Calu3 (cell line): ENCODE measurements at regions of chr20 and their contacts with region 1.

Region 1: GRCh38 chr20:24160563-24161375 is 172.2 kb upstream of the GGTLC1 start:
- DNase-seq: peak; percentile 10
- H3K4me3 Mint-ChIP-seq: no peak overlapping the region
- H3K27ac Mint-ChIP-seq: no peak overlapping the region
- H3K4me1 Mint-ChIP-seq: no peaks in the 10 kb centered on the region
- H3K27me3 Mint-ChIP-seq: no peaks in the 10 kb centered on the region
- CTCF ChIP-seq: no peak

Region 2: DNA sequence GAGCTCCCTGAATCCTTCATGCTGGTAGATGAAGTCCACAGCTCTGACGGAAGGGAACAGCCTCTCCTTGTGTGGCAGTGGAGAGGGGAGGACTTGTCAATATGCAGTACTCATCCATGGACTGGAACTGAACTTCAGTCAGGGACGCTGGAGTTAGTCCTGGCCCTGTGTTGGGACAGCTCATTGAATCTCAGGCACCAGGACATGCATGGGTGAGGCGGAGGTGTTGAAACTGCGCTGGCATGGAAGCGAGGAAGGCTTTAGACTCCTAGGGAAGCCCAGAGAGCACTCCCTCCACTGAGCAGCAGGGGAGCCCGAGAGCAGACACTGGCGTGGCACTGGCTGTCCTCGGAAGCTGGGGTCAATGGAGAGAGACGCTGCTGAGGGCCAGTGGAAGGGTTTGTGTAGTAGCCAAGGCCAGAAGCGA is 10.9 kb before region 1 on chr20:
- CTCF ChIA-PET with region 1: no interaction called
- intact Hi-C with region 1: no loop called
- DNase-seq: peak; percentile 12
- H3K4me3 Mint-ChIP-seq: no peak overlapping the region
- H3K27ac Mint-ChIP-seq: no peak overlapping the region
- H3K4me1 Mint-ChIP-seq: no peaks in the 10 kb centered on the region
- H3K27me3 Mint-ChIP-seq: no peaks in the 10 kb centered on the region
- CTCF ChIP-seq: no peak

Region 3: DNA sequence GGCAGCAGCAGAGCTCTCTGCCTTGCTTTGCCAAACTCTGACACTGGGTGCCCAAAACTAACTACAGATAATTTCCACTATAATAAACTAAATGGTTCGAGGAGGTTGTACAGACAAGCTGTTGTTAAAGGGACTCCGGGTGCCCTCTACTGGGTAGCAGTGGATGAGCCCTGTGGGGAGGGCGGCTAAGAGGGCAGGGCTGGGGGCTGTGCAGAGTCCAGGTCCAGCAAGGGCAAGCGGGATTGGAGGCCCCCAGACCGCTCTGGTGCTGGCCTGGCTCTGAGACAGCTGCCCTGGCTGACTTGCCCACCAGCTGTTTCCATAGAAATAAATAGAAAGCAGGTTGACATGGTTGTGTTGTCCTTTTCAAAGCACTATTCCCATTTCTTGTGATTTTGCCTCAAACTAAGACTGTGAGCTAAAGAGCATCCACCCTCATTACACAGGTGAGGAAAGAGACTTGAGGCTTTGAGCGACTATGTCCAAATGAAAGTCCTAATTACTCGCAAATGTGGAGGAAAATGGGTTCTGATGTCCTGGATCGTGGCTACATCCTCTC is 620.7 kb after region 1 on chr20:
- CTCF ChIA-PET with region 1: interaction called, 4 read pairs
- intact Hi-C with region 1: loop called (anchors 5 kb)
- DNase-seq: peak; percentile 10
- H3K4me3 Mint-ChIP-seq: no peak overlapping the region
- H3K27ac Mint-ChIP-seq: no peak overlapping the region
- H3K4me1 Mint-ChIP-seq: no peaks in the 10 kb centered on the region
- H3K27me3 Mint-ChIP-seq: peaks cover 22% of the 10 kb centered on the region
- CTCF ChIP-seq: no peak